RWPE1 (cell line): ENCODE measurements at regions of chr18 and their contacts with region 1.

Region 1: DNA sequence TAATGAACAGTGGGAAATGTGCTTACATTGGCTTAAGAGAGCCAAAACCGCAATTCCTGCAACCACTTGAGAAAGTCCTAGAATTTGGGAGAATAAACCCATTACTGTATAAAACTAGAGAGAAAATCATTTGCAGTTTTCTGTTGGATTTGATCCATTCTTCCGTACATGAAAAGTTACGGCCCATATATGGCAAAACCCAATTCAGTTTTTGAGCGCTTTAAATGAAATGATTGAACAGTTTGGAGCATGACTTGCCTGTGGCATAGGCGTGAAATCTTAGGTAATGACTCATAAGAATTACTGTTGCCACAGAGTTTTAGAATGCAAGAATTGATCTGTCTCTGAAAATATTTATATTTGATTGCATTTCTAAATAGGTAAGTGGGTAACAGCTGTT is 52.0 kb downstream of the PHLPP1 start:
- DNase-seq: peak; percentile 44
- H3K27ac ChIP-seq: no peak overlapping the region
- CTCF ChIP-seq: no peak

Region 2: GRCh38 chr18:62610701-62611411 is 156.5 kb before region 1 on chr18:
- CTCF ChIA-PET with region 1: no interaction called
- POLR2A ChIA-PET with region 1: no interaction called
- DNase-seq: no peak
- H3K27ac ChIP-seq: no peak overlapping the region
- CTCF ChIP-seq: no peak

Region 3: DNA sequence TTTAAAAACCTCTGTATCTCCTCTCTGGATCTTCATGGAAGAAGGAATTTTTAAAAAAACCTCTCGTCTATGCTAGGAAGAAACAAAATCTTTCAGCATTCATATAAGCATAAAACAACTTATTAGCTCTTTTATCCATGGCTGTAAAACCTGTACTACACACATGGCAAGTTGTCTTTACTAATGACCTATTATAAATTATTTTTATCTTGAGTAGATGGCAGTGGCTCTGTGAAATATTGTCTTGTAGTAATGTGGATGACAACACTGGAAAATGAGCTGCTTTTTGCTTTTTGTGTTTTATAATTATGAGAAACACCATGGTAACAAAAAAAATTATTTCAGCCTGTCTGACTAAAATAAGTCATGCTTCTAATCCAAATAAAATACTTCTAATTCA is 33.0 kb before region 1 on chr18:
- CTCF ChIA-PET with region 1: no interaction called
- POLR2A ChIA-PET with region 1: interaction called, 14 read pairs
- DNase-seq: no peak
- H3K27ac ChIP-seq: no peak overlapping the region
- CTCF ChIP-seq: no peak